Activated CD8-positive, alpha-beta T cell treated with anti-CD3 and anti-CD28 coated beads for 36 hours (primary cell): ENCODE measurements at regions of chr9 and their contacts with region 1.

Region 1: DNA sequence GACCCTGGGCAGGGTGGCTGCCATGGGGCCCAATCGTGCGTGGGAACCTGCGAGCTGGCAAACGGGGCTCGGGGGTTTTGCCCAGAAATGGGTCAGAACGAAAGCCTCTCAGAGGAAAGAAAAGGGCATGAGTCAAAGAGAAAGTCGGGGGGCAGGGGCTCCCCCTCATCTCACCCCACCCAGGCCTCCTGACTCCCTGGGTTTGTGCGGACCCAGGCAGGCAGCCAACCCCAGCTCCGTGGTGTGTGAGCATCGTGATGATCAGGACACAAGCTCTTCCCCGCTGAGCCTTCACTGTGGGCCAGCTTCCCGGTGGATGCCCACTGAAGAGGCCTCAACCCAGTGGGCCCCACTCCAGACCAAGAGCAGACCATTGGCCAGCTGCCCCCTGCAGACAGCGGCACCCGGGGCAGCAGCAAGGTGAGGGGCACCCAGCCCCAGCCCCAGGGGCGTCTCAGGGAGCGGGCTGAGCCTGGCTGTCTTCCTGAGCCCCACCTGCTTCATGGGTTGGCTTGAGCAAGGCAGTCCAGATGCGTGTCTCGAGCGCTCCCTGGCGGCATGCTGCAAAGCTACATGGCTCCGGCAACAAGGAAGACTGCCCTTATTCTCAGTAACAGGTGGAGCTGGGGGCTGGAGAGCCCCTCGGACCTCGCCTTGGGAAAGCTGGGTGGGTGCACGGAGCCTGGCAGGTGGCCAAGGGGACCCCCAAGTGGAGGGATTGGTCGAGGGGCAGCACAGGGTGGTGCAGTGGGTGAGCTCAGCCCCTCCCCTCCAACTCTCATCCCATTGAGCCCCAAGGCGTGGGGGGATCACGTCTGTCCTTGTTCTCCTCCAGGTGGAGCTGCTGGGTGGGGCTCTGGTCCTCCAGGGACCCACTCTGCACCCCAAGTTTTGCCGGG is 3.2 kb upstream of the FUT7 start:
- DNase-seq: peak; percentile 91
- ATAC-seq: peak; percentile 89
- H3K4me3 Mint-ChIP-seq: peak overlapping the region; percentile 47
- H3K27ac Mint-ChIP-seq: peak overlapping the region; percentile 85
- H3K4me1 Mint-ChIP-seq: peaks cover 34% of the 10 kb centered on the region
- H3K27me3 Mint-ChIP-seq: no peaks in the 10 kb centered on the region
- CTCF ChIP-seq: peak; percentile 86

Region 2: GRCh38 chr9:136545966-136546698 is 489.0 kb before region 1 on chr9 and contains the start of gene NOTCH1:
- CTCF ChIA-PET with region 1: no interaction called
- POLR2A ChIA-PET with region 1: no interaction called
- intact Hi-C with region 1: no loop called
- DNase-seq: peak; percentile 89
- ATAC-seq: peak; percentile 76
- H3K4me3 Mint-ChIP-seq: peak within 1 kb of the TSS; percentile 90
- H3K27ac Mint-ChIP-seq: peak within 1 kb of the TSS; percentile 88
- H3K4me1 Mint-ChIP-seq: peaks cover 37% of the 10 kb centered on the region
- H3K27me3 Mint-ChIP-seq: no peaks in the 10 kb centered on the region
- CTCF ChIP-seq: no peak
- total RNA-seq, gene NOTCH1: 45.7 to 47.6 TPM

Region 3: GRCh38 chr9:136937186-136938011 is 97.7 kb before region 1 on chr9:
- CTCF ChIA-PET with region 1: interaction called, 10 read pairs
- POLR2A ChIA-PET with region 1: no interaction called
- intact Hi-C with region 1: no loop called
- DNase-seq: no peak
- ATAC-seq: no peak
- H3K4me3 Mint-ChIP-seq: no peak overlapping the region
- H3K27ac Mint-ChIP-seq: no peak overlapping the region
- H3K4me1 Mint-ChIP-seq: no peaks in the 10 kb centered on the region
- H3K27me3 Mint-ChIP-seq: no peaks in the 10 kb centered on the region
- CTCF ChIP-seq: no peak

Region 4: DNA sequence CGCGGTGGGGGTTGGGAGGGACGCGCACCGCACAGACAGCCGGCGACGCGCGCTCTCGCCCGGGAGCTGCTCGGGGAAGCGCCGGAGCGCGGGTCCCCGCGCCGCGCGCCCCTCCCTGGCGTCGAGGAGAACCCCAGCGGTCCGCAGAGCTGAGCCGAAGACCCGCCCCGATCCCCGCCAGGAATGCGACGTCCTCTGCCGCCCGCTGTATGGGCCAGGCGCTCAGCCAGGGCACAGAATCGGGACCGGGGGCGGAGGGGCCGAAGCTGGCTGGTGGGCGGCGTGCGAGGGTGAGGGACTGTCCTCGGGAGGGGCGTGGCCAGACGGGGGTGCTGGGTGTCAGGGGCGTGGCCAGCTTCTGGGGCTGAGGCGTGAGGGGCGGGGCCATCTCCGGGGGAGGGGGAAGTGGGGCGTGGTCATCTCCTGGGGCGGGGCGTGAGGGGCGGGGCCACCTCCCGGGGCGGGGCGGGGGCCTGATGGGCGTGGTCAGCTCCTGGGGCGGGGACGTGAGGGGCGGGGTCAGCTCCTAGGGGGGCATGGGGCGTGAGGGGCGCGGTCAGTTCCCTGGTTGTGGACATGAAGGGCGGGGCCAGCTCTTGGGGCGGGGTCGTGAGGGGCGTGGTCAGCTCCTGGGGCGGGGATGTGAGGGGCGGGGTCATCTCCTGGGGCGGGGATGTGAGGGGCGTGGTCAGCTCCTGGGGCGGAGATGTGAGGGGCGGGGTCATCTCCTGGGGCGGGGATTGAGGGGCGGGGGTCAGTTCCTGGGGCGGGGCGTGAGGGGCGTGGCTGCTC is 56.8 kb before region 1 on chr9:
- CTCF ChIA-PET with region 1: interaction called, 24 read pairs
- POLR2A ChIA-PET with region 1: no interaction called
- intact Hi-C with region 1: no loop called
- DNase-seq: peak; percentile 76
- ATAC-seq: peak; percentile 75
- H3K4me3 Mint-ChIP-seq: no peak overlapping the region
- H3K27ac Mint-ChIP-seq: no peak overlapping the region
- H3K4me1 Mint-ChIP-seq: peaks cover 20% of the 10 kb centered on the region
- H3K27me3 Mint-ChIP-seq: no peaks in the 10 kb centered on the region
- CTCF ChIP-seq: no peak

Region 5: DNA sequence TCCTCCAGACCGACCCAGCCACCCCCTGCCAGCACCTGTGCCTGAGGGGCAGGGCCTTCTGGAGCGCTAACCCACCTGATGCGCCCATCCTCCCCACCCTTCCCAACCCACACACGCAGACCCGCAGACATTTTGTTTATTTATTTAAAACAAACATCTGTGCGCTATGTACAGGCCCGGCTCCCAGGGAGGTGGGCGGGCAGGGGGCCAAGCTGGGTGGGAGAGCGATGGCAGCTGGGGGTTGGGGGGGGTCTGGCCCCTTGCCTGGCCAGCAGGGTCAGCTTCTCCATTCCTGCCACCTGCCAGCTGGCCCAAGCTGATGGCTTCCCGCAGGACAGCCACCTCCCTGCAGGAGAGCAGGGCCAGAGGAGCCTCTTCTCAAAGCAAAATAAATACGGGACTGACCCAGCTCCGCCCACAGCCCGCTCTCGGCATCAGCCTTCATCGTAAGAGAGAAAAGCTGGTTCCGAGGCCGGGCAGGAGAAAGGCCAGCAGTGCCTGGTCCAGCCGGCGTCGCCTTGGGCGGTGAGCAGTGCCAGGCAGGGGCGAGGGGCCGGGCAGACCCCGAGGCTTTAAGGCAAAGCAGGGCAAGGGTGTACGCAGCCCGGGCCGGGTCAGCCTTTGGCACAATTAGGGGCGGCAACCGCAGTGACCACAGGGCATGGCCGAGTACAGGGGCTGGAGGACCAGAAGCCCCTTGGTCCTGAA is 27.9 kb before region 1 on chr9:
- CTCF ChIA-PET with region 1: interaction called, 31 read pairs
- POLR2A ChIA-PET with region 1: interaction called, 3 read pairs
- intact Hi-C with region 1: no loop called
- DNase-seq: no peak
- ATAC-seq: no peak
- H3K4me3 Mint-ChIP-seq: no peak overlapping the region
- H3K27ac Mint-ChIP-seq: no peak overlapping the region
- H3K4me1 Mint-ChIP-seq: peaks cover 13% of the 10 kb centered on the region
- H3K27me3 Mint-ChIP-seq: no peaks in the 10 kb centered on the region
- CTCF ChIP-seq: no peak

Region 6: DNA sequence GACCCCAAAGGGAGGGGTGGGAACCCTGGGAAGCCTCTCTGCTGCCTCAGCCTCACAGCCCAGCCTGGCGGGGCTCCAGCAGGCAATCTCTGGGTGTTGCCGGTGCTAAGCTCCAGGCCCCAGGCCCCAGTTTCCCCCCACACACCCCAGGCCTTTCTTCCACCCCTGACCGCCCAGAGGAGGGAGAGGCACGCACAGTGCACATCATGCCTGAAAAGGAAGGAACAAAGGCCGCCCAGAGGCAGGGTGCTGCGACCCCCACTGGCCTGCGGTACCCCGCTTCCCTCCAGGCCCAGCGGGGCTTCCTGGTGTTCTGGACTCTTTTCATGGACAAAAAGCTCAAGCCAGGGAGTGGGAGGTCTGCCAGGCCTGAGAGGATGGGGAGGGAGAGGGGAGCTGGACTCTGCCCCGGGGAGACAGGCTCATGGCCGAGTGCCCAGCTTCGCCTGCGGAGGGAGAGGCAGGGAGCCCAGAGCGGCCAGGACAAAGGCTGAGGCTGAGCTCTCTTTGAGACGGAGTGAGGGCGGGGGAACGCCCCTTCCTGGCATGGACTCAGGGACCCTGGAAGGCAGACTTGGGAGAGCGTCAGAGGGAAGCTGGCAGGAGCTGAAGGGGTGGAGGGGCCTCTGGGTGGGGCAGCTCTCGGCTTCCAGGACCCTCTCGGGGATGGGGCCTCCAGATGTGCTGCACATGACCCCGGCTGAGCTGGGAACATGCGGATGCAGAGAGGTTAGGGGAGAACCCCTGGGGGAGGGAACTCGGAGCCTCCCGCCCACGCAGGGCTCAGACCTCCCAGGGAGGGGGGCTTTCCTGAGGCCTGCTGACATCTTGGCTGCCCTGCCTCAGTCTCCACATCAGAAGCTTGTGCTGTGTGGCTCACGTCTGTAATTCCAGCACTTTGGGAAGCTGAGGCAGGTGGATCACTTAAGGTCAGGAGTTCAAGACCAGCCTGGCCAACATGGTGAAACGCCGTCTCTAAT is 20.6 kb after region 1 on chr9:
- CTCF ChIA-PET with region 1: interaction called, 11 read pairs
- POLR2A ChIA-PET with region 1: interaction called, 7 read pairs
- intact Hi-C with region 1: no loop called
- DNase-seq: no peak
- ATAC-seq: no peak
- H3K4me3 Mint-ChIP-seq: no peak overlapping the region
- H3K27ac Mint-ChIP-seq: no peak overlapping the region
- H3K4me1 Mint-ChIP-seq: no peaks in the 10 kb centered on the region
- H3K27me3 Mint-ChIP-seq: peaks cover 7% of the 10 kb centered on the region
- CTCF ChIP-seq: no peak

Region 7: DNA sequence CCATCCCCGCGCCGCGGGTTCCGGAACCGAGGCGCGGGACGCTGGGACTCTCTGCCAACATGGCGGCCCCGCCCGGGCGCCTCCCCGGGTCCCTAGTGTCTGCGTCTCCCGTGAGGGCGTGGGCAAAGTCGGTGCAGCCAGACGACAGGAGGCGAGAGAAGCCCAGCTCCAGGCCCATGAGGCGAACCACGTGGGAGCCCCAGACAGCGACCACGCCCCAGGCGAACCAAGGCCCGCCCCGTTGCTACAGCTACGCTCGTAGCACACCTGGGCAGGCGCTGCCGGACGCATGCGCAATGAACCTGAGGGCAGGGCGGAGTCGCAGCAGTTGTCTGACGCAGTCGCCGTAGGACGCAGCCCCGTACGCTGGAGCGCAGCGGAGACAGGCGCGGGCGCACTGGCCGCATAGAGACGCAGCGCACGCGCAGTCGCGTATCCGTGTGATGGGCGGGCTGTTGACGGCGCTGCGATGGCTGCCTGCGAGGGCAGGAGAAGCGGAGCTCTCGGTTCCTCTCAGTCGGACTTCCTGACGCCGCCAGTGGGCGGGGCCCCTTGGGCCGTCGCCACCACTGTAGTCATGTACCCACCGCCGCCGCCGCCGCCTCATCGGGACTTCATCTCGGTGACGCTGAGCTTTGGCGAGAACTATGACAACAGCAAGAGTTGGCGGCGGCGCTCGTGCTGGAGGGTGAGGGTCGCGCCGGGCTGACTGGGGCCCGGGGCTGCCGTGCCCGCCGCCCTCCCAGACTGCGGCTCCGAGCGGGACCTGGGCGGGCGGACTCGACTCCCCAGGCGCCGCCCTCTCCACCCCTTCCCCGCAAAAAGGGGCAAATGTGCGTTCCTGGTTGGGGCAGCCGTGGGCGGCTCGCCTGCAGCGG is 51.7 kb after region 1 on chr9 and contains the start of gene MAN1B1:
- CTCF ChIA-PET with region 1: interaction called, 12 read pairs
- POLR2A ChIA-PET with region 1: interaction called, 3 read pairs
- intact Hi-C with region 1: no loop called
- DNase-seq: peak; percentile 100
- ATAC-seq: peak; percentile 86
- H3K4me3 Mint-ChIP-seq: peak within 1 kb of the TSS; percentile 90
- H3K27ac Mint-ChIP-seq: peak within 1 kb of the TSS; percentile 94
- H3K4me1 Mint-ChIP-seq: peaks cover 38% of the 10 kb centered on the region
- H3K27me3 Mint-ChIP-seq: no peaks in the 10 kb centered on the region
- CTCF ChIP-seq: no peak
- total RNA-seq, gene MAN1B1: 31.1 to 33.2 TPM